Heart right ventricle (tissue), 16 donors: ENCODE measurements at regions of chr20 and their contacts with region 1.

Region 1: GRCh38 chr20:483813-484644 is 21.7 kb upstream of the TBC1D20 start:
- DNase-seq: peak; percentile 48 to 64
- ATAC-seq: peak; percentile 72 to 96 (median 92)
- H3K4me3 ChIP-seq: no peak overlapping the region
- H3K27ac ChIP-seq: peak overlapping the region in 4 of 10 donors; percentile 8 to 24 (median 18)
- H3K4me1 ChIP-seq: peaks cover 0 to 21% (median 8%) of the 10 kb centered on the region in 9 donors
- H3K27me3 ChIP-seq: no peaks in the 10 kb centered on the region
- CTCF ChIP-seq: no peak

Region 2: GRCh38 chr20:420641-421574 is 63.1 kb before region 1 on chr20:
- intact Hi-C with region 1: loop called in 1 of 10 experiments (anchors 10 kb)
- DNase-seq: no peak
- ATAC-seq: peak in 1 of 8 donors; percentile 20
- H3K4me3 ChIP-seq: no peak overlapping the region
- H3K27ac ChIP-seq: no peak overlapping the region
- H3K4me1 ChIP-seq: peaks cover 0 to 4% (median 0%) of the 10 kb centered on the region in 9 donors
- H3K27me3 ChIP-seq: no peaks in the 10 kb centered on the region
- CTCF ChIP-seq: no peak